Sigmoid colon (tissue), 7 donors: ENCODE measurements at regions of chr17 and their contacts with region 1.

Region 1: DNA sequence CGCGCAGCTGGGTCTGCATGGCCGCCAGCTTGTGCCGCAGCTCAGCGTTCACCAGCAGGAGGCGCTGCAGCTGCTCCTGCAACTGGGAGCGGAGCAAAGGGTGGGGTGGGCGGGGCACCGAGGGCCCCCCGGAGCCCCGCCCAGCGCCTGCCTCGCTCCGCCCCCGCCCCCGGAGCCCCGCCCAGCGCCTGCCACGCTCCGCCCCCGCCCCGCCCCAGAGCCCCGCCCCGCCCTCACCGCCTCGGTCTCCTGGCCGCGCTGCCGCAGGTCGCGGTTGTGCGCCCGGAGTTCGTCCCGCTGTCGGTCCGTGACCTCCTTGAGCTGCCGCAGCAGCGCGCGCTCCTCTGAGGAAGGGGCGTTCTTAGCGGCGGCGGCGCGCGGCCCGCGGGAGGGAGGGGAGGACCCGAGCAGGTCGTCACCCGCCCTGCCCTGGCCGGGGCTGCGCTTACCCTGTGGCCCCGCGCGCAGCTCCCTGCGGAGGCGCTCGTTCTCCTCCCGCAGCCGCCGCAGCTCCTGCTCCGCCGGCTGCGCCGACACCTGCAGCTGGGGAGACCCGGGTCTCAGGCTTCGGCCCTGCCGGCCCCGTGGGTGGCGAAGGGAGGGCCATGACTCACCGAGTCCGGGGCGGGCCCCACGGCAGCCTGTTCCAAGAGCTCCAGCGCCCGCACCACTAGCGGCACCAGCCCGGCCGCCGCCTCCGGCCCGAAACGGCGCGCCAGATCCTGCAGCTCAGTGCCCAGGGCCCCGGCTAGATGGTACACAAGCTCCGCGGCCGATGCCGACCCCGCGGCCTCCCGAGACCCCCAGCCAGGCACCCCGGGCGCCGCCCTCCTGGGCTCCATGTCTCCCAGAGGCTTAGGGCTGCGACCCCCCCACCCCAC is 463 bp downstream of the RILP start:
- DNase-seq: peak; percentile 97
- H3K4me3 ChIP-seq: peak overlapping the region; percentile 58 to 89 (median 84)
- H3K27ac ChIP-seq: peak overlapping the region; percentile 100
- H3K4me1 ChIP-seq: peaks cover 0 to 46% (median 40%) of the 10 kb centered on the region in 4 donors
- H3K27me3 ChIP-seq: no peaks in the 10 kb centered on the region
- CTCF ChIP-seq: peak in 2 of 4 experiments; percentile 46 to 94
- EP300 ChIP-seq: no peak
- POLR2A ChIP-seq: peak in 1 of 2 donors; percentile 45

Region 2: DNA sequence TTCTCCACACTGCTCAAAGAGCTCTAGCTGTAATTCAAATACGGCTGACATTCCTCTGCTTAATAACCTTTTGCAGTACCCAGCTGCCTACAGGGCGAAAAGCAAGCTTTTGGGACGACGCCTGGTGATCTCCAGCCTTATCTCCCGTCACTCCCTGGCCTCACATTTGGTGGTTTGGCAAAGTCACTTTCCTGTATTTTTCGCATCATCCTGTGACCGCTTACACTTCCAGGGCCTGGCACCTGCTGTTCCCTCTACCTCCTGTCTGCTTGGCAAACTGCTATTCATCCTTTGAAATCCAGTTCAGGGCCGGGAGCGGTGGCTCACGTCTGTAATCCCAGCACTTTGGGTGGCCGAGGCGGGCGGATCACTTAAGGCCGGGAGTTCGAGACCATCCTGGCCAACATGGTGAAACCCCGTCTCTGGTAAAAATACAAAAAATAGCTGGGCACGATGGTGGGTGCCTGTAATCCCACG is 381.7 kb before region 1 on chr17:
- intact Hi-C with region 1: loop called (anchors 5 kb)
- DNase-seq: no peak
- H3K4me3 ChIP-seq: peak overlapping the region; percentile 50 to 91 (median 72)
- H3K27ac ChIP-seq: peak overlapping the region; percentile 85 to 90 (median 89)
- H3K4me1 ChIP-seq: peaks cover 0 to 24% (median 19%) of the 10 kb centered on the region in 4 donors
- H3K27me3 ChIP-seq: peaks cover 19 to 34% (median 23%) of the 10 kb centered on the region in 3 donors
- CTCF ChIP-seq: no peak
- EP300 ChIP-seq: no peak
- POLR2A ChIP-seq: no peak

Region 3: DNA sequence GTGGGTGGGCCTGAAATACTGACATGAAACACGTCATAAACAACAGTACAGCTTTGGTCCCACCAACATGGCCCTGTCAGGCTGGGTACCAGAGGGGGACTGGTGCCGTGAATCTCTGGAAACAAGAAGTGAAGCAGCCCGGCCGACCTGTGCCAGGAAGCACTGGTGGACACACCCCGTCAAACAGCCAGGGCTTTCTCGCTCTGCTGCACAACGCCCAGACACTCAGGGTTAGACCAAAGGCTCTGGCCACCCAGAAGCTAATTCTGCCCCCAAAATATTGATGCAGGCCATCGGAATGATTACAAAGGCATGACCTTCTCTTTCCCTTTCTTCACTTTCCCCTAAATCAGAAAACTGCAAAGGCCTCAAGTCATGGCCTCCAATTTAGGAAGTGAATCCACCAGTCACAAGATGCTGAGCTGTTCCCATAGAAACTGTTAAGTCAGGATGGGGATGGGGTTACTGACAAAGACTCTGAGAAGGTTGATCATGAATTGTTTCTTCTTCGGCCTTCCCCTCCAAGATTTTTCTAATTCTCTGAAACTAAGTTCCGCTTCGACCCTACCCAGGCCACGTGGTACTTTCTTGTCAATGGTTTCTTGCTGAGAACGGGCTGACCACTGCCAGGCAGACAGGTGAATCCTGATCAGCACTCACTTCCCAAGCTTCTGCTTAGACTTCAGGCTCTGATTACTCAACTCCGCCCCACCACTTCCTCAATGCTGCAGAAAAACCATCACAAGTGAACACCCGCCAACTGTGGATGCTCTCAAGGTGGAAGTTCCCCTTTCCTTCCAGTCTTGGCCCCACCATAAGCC is 93.3 kb before region 1 on chr17:
- intact Hi-C with region 1: no loop called
- DNase-seq: no peak
- H3K4me3 ChIP-seq: no peak overlapping the region
- H3K27ac ChIP-seq: peak overlapping the region in 3 of 4 donors; percentile 11 to 75 (median 74)
- H3K4me1 ChIP-seq: peaks cover 0 to 58% (median 54%) of the 10 kb centered on the region in 4 donors
- H3K27me3 ChIP-seq: no peaks in the 10 kb centered on the region
- CTCF ChIP-seq: no peak
- EP300 ChIP-seq: no peak
- POLR2A ChIP-seq: no peak

Region 4: DNA sequence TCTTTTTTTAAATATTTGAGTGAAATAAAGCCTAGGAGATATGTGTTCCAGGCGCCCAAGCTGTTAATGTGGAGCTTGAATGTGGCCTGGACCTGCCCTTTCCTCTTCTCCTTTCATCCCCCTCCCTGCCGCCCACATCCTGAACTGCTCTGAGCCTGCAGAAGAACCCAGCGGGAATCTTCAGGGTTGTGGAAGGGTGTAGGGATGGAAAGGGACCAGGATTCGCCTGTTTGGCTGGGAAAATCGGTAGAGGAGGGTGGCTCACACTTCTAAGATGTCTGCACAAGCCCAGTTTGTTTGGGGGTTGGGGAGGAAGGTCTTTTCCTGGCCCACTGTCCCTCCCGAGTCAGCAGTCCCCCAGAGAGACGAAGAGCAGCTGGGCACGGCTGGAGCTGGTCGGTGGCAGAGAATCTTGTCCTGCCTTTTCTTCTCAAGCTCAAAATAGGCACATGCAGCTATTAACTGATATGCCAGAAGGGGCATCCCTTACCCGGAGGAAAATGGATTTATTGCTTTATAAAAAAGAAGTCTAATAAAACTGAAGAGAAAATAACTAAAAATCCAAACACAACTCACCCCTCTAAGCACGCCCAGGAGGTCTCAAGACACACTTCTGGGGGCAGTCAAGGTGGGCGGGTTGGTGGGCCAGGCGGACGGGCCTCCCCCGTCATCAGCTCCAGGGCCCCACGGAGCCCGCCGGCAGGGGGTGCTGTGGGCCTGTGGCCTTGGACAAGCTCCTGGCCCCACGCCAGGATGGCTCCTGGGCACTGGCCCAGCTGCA is 75.1 kb before region 1 on chr17:
- intact Hi-C with region 1: loop called (anchors 1 kb)
- DNase-seq: peak; percentile 94
- H3K4me3 ChIP-seq: no peak overlapping the region
- H3K27ac ChIP-seq: peak overlapping the region; percentile 36 to 92 (median 76)
- H3K4me1 ChIP-seq: peaks cover 0 to 42% (median 37%) of the 10 kb centered on the region in 4 donors
- H3K27me3 ChIP-seq: no peaks in the 10 kb centered on the region
- CTCF ChIP-seq: peak; percentile 95 to 97 (median 96)
- EP300 ChIP-seq: no peak
- POLR2A ChIP-seq: no peak

Region 5: GRCh38 chr17:1684378-1685189 is 35.4 kb after region 1 on chr17 and contains the start of gene PRPF8:
- intact Hi-C with region 1: loop called (anchors 1 kb)
- DNase-seq: peak; percentile 99
- H3K4me3 ChIP-seq: peak within 1 kb of the TSS; percentile 82 to 97 (median 90)
- H3K27ac ChIP-seq: peak within 1 kb of the TSS; percentile 91 to 98 (median 96)
- H3K4me1 ChIP-seq: peaks cover 0 to 28% (median 26%) of the 10 kb centered on the region in 4 donors
- H3K27me3 ChIP-seq: no peaks in the 10 kb centered on the region
- CTCF ChIP-seq: no peak
- EP300 ChIP-seq: no peak
- POLR2A ChIP-seq: peak; percentile 98
- total RNA-seq, gene PRPF8: 115 to 155 (median 125) TPM

Region 6: DNA sequence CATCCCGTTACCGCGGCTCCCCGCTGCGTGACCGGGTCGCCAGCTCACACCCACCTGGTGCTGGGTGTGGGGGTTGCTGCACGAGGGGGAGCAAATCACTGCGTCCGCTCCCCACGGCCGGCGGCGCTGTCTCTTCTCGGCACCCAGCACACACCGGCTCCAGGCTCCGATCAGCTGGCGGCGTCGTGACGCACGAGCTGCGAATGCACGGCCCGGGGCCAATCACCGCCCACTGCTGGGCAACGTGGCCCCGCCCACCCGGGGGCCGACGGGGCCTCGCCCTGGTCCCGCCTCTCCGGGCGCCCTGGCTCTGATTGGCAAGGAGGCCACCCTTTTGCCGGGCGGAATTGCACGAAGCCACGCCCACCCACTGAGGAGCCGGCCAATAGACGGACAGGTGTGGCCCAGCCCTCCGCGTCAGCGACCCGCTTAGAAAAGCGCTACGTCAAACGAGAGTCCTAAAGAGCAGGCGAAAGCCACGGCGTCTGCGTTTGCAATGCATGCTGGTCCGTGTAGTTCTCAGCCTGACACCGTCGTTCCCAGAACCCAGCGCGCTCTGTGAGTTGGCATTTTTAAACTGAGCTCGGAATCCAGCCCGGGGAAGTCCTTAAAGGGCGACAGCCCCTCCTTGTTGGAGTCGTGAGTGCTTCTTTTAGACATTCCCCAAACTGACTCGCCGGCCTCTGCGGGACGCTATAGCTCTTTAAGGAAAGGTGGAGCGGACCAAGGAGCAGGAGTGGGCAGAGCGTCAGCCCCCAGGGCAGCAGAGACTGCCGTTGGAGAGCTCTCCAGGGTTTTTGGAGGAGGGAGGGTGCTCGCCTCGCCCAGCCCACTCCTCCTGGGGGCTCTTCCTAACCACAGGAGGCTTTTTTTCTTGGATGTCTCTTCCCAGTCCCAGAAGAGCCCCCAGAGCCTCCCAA is 67.1 kb after region 1 on chr17:
- intact Hi-C with region 1: loop called (anchors 2 kb)
- DNase-seq: peak; percentile 100
- H3K4me3 ChIP-seq: peak overlapping the region; percentile 73 to 99 (median 90)
- H3K27ac ChIP-seq: peak overlapping the region; percentile 99 to 100 (median 100)
- H3K4me1 ChIP-seq: peaks cover 0 to 49% (median 39%) of the 10 kb centered on the region in 4 donors
- H3K27me3 ChIP-seq: no peaks in the 10 kb centered on the region
- CTCF ChIP-seq: no peak
- EP300 ChIP-seq: peak in 1 of 4 donors; percentile 94
- POLR2A ChIP-seq: peak; percentile 100

Region 7: DNA sequence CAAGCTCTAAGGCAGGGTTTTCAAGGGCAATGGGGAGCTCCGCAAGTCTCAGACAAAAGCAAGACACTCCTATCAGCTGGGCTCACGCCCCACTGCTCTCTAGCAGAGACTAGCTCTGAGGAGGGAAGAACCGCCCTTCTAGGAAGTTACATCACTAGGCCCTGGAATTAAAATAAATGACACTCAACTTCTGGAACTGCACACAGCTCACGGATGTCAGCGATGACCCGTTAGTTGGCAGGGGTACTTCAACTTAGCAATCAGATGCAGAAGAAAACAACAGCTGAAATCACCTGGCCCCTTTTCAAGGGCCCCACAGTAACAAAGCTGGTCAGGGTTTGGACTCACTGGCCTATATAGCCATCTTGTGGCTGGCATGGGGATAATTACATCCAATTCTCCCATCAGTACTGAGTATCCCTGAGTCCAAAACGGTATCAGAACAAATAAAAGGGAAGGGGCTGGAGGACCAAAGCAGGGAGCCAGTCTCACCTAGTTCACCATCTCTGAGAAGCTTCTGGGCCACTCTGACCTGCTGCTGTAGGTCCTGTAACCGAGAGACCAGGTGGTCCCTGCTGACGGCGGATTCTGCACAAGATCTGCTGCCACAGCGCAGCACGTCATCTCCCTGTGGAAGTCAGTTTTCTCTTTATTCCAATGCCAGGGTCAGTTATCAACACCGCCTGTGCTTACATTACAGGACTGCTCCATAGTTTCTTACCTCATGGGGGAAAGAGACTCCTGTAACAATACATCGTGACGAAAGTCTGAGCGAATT is 134.8 kb after region 1 on chr17:
- intact Hi-C with region 1: loop called (anchors 2 kb)
- DNase-seq: peak; percentile 95
- H3K4me3 ChIP-seq: peak overlapping the region in 2 of 4 donors; percentile 3 to 19
- H3K27ac ChIP-seq: peak overlapping the region; percentile 87 to 94 (median 91)
- H3K4me1 ChIP-seq: peaks cover 0 to 82% (median 76%) of the 10 kb centered on the region in 4 donors
- H3K27me3 ChIP-seq: no peaks in the 10 kb centered on the region
- CTCF ChIP-seq: peak; percentile 65 to 90 (median 85)
- EP300 ChIP-seq: peak in 2 of 4 donors; percentile 63 to 75
- POLR2A ChIP-seq: peak in 1 of 2 donors; percentile 54

Region 8: DNA sequence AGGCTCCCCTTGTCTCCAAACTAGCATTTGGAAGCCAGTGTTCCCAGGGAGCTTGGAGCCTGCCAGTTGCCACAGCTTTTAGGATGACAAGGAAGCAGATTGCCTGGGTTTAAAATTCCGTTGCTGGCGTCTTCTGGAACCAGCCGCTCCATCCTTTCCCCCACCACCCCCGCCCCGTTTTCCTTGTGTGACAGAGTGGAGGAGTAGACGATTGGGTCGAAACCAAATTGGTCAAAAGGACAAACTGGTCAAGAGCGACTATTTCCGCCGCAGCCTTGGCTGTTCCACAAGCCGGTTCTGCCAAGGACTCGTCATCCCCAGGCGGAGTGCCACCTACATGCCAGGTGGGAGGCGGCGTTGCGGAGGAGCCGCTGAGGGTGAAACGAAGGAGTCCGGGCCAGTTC is 271.7 kb after region 1 on chr17:
- intact Hi-C with region 1: no loop called
- DNase-seq: no peak
- H3K4me3 ChIP-seq: no peak overlapping the region
- H3K27ac ChIP-seq: no peak overlapping the region
- H3K4me1 ChIP-seq: no peaks in the 10 kb centered on the region
- H3K27me3 ChIP-seq: peaks cover 0 to 13% (median 0%) of the 10 kb centered on the region in 3 donors
- CTCF ChIP-seq: no peak
- EP300 ChIP-seq: no peak
- POLR2A ChIP-seq: no peak